ENCODE measurements at regions of chr7 and their contacts with region 1.

Region 1: DNA sequence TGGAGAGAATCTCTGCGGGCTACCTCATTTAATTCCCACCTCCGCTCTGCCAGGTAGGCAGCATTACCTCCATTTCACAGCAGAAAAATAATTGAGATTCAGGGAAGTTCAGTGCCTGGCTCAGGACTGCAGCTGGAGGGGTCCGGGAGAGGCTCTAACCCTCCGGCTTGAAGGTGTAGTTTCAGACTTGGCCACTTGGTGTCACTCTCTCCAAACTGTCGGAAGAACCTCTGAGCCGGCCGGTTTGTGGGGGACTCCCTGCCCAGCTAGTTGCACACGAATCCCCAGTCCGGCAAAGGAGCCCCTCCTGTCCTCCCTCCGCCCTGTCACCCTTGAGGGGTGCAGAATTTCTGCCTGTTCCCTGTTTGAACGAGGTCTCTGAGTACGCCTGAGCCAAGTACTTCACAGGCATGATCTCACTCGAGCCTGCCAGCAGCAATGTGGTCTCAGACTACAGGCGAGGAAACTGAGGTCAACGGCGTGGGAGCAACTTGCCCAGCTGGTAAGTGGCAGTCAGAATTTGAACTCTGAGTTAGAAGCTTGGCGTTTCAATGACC is 144.7 kb upstream of the ZNF716 start:
- DNase-seq: no peak
- H3K4me3 ChIP-seq: no peak overlapping the region
- H3K27ac ChIP-seq: no peak overlapping the region
- H3K4me1 ChIP-seq: no peaks in the 10 kb centered on the region
- H3K27me3 ChIP-seq: no peaks in the 10 kb centered on the region
- CTCF ChIP-seq: peak in 2 of 5 experiments; percentile 11 to 24
- EP300 ChIP-seq: no peak
- POLR2A ChIP-seq: no peak

Region 2: GRCh38 chr7:57339198-57339944 is 34.1 kb after region 1 on chr7:
- in situ Hi-C with region 1: no loop called
- intact Hi-C with region 1: loop called (anchors 1 kb)
- DNase-seq: no peak
- H3K4me3 ChIP-seq: no peak overlapping the region
- H3K27ac ChIP-seq: no peak overlapping the region
- H3K4me1 ChIP-seq: no peaks in the 10 kb centered on the region
- H3K27me3 ChIP-seq: no peaks in the 10 kb centered on the region
- CTCF ChIP-seq: no peak
- EP300 ChIP-seq: no peak
- POLR2A ChIP-seq: no peak

Region 3: DNA sequence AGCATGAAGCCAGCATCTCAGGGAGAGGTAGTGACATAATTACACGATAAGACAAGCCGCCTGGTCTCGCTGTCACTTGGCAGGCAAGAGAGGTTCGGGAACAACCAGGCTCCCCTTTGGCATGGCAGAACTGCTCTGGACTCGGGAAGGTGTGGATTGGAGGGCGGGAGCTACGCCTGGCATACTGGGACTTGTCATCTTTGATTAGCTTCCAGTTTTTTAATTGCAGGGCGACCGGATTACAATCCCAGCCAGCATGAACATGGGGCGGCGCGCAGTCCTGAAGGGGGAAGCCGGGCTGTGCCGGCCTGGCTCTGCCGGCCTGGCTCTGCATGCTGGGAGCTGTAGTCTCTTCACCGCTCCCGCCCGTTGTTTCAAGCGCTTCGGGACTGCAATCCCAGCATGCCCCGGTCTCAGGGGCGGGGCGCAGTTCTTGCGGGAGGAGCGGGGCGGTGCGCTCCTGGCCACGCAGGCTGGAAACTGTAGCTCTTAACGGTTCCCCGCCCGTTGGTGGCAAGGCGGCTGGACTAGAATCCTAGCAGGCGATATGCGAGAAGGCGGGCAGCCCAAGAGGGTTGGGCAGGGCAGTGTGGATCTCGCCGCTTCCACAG is 99.2 kb after region 1 on chr7:
- in situ Hi-C with region 1: loop called in 1 of 4 experiments (anchors 25 kb)
- intact Hi-C with region 1: no loop called
- DNase-seq: no peak
- H3K4me3 ChIP-seq: no peak overlapping the region
- H3K27ac ChIP-seq: no peak overlapping the region
- H3K4me1 ChIP-seq: no peaks in the 10 kb centered on the region
- H3K27me3 ChIP-seq: no peaks in the 10 kb centered on the region
- CTCF ChIP-seq: no peak
- EP300 ChIP-seq: no peak
- POLR2A ChIP-seq: no peak

Region 4: GRCh38 chr7:57529976-57530375 is 224.7 kb after region 1 on chr7:
- in situ Hi-C with region 1: no loop called
- intact Hi-C with region 1: no loop called
- DNase-seq: no peak
- H3K4me3 ChIP-seq: no peak overlapping the region
- H3K27ac ChIP-seq: no peak overlapping the region
- H3K4me1 ChIP-seq: no peaks in the 10 kb centered on the region
- H3K27me3 ChIP-seq: no peaks in the 10 kb centered on the region
- CTCF ChIP-seq: no peak
- EP300 ChIP-seq: no peak
- POLR2A ChIP-seq: no peak

Region 5: DNA sequence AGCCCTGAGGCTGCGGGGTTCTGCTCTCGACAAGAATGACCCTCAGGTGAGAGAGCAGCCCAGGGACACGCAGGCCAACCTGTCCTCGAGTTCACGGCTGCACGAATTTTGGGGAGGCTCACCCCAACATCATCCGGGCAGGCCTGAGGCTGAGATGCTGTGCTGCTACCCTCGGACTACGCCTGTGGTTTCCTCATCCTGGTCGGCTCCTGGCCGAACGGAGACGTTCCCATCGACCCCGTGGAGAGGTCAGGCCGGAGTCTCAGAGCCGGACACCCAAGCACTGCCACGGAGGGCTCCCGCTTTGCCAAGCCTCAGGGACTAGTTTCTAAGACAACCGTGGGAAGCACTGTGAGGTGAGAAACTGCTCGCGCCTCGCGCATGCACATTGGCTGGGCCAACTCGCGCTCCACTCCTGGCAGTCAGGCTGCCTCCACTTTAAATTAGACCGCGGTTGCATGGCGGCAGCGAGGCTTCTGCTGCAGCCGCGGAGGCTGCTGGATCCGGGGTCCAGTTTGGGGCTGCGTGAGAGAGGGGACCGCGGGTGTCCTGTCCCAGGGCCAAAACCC is 348.1 kb after region 1 on chr7:
- in situ Hi-C with region 1: no loop called
- intact Hi-C with region 1: no loop called
- DNase-seq: no peak
- H3K4me3 ChIP-seq: no peak overlapping the region
- H3K27ac ChIP-seq: no peak overlapping the region
- H3K4me1 ChIP-seq: no peaks in the 10 kb centered on the region
- H3K27me3 ChIP-seq: no peaks in the 10 kb centered on the region
- CTCF ChIP-seq: no peak
- EP300 ChIP-seq: no peak
- POLR2A ChIP-seq: no peak